ENCODE measurements at regions of chr7 and their contacts with region 1.

Region 1: GRCh38 chr7:92134271-92135051 is at the start of gene CYP51A1:
- DNase-seq: peak; percentile 97
- ATAC-seq: peak; percentile 83
- H3K4me3 Mint-ChIP-seq: peak within 1 kb of the TSS; percentile 99
- H3K27ac Mint-ChIP-seq: peak within 1 kb of the TSS; percentile 100
- H3K4me1 Mint-ChIP-seq: peaks cover 47% of the 10 kb centered on the region
- H3K27me3 Mint-ChIP-seq: no peaks in the 10 kb centered on the region
- CTCF ChIP-seq: no peak
- total RNA-seq, gene CYP51A1: 90.9 and 92.8 TPM in 2 replicates

Region 2: GRCh38 chr7:90346336-90347125 is 1787.9 kb before region 1 on chr7 and contains the start of gene GTPBP10:
- CTCF ChIA-PET with region 1: no interaction called
- POLR2A ChIA-PET with region 1: no interaction called
- intact Hi-C with region 1: loop called (anchors 2 kb)
- DNase-seq: peak; percentile 90
- ATAC-seq: peak; percentile 97
- H3K4me3 Mint-ChIP-seq: peak within 1 kb of the TSS; percentile 96
- H3K27ac Mint-ChIP-seq: peak within 1 kb of the TSS; percentile 98
- H3K4me1 Mint-ChIP-seq: peaks cover 35% of the 10 kb centered on the region
- H3K27me3 Mint-ChIP-seq: no peaks in the 10 kb centered on the region
- CTCF ChIP-seq: peak; percentile 37
- total RNA-seq, gene GTPBP10: 28.8 and 29.5 TPM in 2 replicates

Region 3: DNA sequence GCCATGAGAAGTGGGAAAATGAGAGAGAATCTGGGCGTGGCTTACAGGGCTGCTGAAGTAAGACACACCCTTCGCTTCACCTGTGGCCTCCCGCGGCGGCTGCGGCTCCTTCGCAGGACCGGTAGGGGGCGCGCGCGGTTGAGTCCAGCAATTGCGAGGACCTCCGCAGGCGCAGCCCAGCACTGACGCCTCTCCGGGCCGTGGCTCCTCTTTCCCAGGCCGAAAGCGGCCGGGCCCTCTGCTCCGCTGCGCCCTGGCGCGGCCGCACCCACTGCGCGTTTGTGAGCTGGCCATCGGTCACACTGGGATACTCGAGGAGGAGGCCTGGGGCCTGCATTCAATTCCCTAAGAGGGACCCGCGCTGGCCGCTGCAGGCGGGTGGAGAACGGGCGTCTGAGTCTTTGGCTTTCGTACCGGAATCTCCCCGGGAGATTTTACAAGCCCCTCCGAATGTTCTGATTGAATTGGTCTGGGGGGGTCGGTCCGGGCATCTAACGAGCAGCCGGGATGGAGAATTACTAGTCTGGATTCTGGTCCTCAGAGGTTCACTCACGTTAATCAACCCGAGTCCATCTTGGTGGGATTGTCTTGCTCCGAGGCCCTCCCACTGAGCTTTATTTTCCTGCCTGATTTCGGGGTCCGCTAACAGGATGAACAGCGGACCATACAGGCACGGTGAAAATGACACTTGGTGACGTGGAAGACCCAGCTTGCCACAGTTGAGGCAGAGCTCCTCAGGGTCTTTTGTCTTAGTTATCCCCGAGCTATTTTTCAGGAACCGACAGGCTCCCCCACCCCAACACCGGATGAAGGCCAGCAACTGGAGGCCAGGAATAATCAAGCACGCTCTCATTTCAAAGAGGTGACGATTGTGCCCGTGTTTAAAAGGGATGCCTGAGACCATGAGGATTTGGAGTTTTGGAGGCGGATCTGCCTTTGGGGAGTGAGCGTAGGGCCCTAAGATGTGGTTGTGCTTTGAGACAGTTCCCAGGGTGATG is 44.8 kb after region 1 on chr7 and contains the start of gene LRRD1:
- CTCF ChIA-PET with region 1: no interaction called
- POLR2A ChIA-PET with region 1: interaction called, 3 read pairs
- intact Hi-C with region 1: loop called (anchors 1 kb)
- DNase-seq: peak; percentile 90
- ATAC-seq: peak; percentile 100
- H3K4me3 Mint-ChIP-seq: peak within 1 kb of the TSS; percentile 82
- H3K27ac Mint-ChIP-seq: no peak within 1 kb of the TSS
- H3K4me1 Mint-ChIP-seq: peaks cover 11% of the 10 kb centered on the region
- H3K27me3 Mint-ChIP-seq: no peaks in the 10 kb centered on the region
- CTCF ChIP-seq: no peak
- total RNA-seq, gene LRRD1: not detected in 2 replicates

Region 4: DNA sequence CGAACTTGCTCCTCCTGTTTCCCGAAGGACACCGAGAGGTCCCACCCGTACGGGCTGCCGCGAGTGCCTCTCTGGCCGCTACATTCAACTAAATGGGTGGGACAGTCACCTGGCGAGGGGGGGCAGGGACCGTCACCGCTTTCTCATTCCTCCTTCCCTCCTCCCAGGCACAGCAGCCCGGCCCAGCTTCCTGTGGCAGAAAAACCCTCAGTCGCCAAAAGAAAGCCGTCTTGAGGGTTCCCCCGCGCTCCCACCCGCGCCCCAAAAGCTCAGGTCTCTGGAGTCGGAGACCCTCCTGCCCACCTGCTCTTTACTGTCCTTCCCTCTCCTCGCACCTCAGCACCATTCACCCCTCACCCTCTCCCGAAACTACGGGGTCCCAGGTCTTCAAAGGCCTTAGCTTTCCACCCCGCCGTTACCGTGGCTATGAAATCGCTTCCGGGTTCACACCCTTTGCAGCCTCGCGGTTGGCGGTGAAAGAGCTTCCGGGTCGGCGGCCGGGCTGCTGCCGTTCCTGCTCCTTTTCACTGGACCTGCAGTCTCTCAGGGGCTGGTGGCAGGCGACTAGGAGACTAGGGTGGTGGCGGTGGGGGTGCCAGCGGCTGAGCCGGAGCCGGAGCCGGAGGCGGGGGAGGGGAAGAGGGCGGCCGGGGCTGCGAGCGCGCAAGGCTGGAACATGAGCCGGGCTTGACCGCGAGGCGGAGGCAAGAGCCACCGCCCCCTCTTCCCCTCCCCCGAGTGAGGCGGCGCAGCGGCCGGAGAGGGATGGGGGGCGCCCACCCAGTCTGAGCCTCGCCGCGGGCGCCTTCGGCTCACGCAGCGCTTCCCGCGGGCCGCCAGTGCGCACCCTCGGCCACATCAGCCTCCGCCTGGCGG is 111.3 kb after region 1 on chr7 and contains the starts of genes ANKIB1 and KRIT1:
- CTCF ChIA-PET with region 1: no interaction called
- POLR2A ChIA-PET with region 1: interaction called, 22 read pairs
- intact Hi-C with region 1: loop called (anchors 1 kb)
- DNase-seq: peak; percentile 79
- ATAC-seq: peak; percentile 84
- H3K4me3 Mint-ChIP-seq: peak within 1 kb of the TSS; percentile 100
- H3K27ac Mint-ChIP-seq: peak within 1 kb of the TSS; percentile 99
- H3K4me1 Mint-ChIP-seq: peaks cover 40% of the 10 kb centered on the region
- H3K27me3 Mint-ChIP-seq: no peaks in the 10 kb centered on the region
- CTCF ChIP-seq: no peak
- total RNA-seq, gene ANKIB1: 42.5 and 50.6 TPM in 2 replicates
- total RNA-seq, gene KRIT1: 53.4 and 61.1 TPM in 2 replicates

Region 5: GRCh38 chr7:92588561-92588960 is 454.1 kb after region 1 on chr7:
- CTCF ChIA-PET with region 1: no interaction called
- POLR2A ChIA-PET with region 1: no interaction called
- intact Hi-C with region 1: loop called (anchors 2 kb)
- DNase-seq: no peak
- ATAC-seq: no peak
- H3K4me3 Mint-ChIP-seq: peak overlapping the region; percentile 80
- H3K27ac Mint-ChIP-seq: peak overlapping the region; percentile 80
- H3K4me1 Mint-ChIP-seq: peaks cover 59% of the 10 kb centered on the region
- H3K27me3 Mint-ChIP-seq: no peaks in the 10 kb centered on the region
- CTCF ChIP-seq: no peak

Region 6: GRCh38 chr7:92661651-92662050 is 527.2 kb after region 1 on chr7:
- CTCF ChIA-PET with region 1: no interaction called
- POLR2A ChIA-PET with region 1: no interaction called
- intact Hi-C with region 1: no loop called
- DNase-seq: no peak
- ATAC-seq: no peak
- H3K4me3 Mint-ChIP-seq: no peak overlapping the region
- H3K27ac Mint-ChIP-seq: no peak overlapping the region
- H3K4me1 Mint-ChIP-seq: peaks cover 10% of the 10 kb centered on the region
- H3K27me3 Mint-ChIP-seq: no peaks in the 10 kb centered on the region
- CTCF ChIP-seq: no peak

Region 7: GRCh38 chr7:92731335-92732063 is 597.0 kb after region 1 on chr7:
- CTCF ChIA-PET with region 1: no interaction called
- POLR2A ChIA-PET with region 1: no interaction called
- intact Hi-C with region 1: no loop called
- DNase-seq: no peak
- ATAC-seq: peak; percentile 67
- H3K4me3 Mint-ChIP-seq: peak overlapping the region; percentile 29
- H3K27ac Mint-ChIP-seq: peak overlapping the region; percentile 64
- H3K4me1 Mint-ChIP-seq: peaks cover 29% of the 10 kb centered on the region
- H3K27me3 Mint-ChIP-seq: no peaks in the 10 kb centered on the region
- CTCF ChIP-seq: no peak

Measured in activated B cell treated with CpG ODN at 0.5 μM for 24 hours (primary cell).